GM10248 (cell line): ENCODE measurements at regions of chr5 and their contacts with region 1.

Region 1: GRCh38 chr5:176660860-176661641 is 13.8 kb downstream of the TSPAN17 start:
- DNase-seq: peak; percentile 94
- CTCF ChIP-seq: peak; percentile 97

Region 2: GRCh38 chr5:176573564-176574296 is 87.3 kb before region 1 on chr5:
- CTCF ChIA-PET with region 1: interaction called, 12 read pairs
- POLR2A ChIA-PET with region 1: no interaction called
- DNase-seq: peak; percentile 88
- CTCF ChIP-seq: peak; percentile 81

Region 3: DNA sequence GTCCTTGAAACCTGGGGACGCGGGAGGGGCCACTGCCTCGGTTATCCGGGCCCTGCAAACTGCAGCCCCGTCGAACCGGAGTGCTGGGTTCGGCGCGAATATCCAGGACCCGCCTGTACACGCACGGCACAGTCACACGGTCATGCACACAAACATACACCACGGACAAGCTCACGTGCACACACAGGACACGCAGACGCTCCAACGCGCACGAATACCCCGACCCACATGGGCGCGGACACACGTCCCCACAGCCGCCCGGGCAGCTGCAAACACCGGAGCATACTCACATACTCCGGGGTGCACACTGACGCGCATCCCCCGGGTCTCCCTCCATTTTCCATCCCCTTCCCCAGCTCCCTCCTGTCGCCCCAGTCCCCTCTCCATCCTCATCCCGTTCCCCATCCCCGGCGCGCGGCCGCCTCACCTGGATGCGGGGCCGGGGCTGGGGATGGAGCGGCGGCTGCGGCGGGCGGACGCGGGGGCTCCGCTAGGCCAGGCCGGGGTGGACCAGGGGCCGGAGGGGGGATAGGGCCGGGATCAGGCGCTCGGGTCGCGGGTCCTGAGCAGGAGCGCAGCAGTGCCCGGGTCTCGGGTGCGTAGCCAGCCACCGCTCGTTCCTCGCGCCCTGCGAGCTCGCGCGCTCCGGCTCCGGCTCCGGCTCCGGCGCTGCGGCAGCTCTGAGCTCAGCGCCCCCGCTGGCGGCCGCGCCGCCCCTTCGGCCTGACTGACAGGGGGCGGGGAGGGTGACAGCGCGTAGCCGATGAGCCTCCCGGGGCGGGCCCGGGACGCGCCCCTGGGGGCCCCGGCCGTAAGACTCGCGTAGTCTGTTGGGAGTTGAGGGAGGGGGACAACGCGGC is 31.0 kb before region 1 on chr5 and contains the starts of genes EIF4E1B and SNCB:
- CTCF ChIA-PET with region 1: interaction called, 12 read pairs
- POLR2A ChIA-PET with region 1: no interaction called
- DNase-seq: peak; percentile 80
- CTCF ChIP-seq: no peak

Region 4: GRCh38 chr5:176675675-176676360 is 14.8 kb after region 1 on chr5:
- CTCF ChIA-PET with region 1: interaction called, 158 read pairs
- POLR2A ChIA-PET with region 1: no interaction called
- DNase-seq: no peak
- CTCF ChIP-seq: no peak

Region 5: DNA sequence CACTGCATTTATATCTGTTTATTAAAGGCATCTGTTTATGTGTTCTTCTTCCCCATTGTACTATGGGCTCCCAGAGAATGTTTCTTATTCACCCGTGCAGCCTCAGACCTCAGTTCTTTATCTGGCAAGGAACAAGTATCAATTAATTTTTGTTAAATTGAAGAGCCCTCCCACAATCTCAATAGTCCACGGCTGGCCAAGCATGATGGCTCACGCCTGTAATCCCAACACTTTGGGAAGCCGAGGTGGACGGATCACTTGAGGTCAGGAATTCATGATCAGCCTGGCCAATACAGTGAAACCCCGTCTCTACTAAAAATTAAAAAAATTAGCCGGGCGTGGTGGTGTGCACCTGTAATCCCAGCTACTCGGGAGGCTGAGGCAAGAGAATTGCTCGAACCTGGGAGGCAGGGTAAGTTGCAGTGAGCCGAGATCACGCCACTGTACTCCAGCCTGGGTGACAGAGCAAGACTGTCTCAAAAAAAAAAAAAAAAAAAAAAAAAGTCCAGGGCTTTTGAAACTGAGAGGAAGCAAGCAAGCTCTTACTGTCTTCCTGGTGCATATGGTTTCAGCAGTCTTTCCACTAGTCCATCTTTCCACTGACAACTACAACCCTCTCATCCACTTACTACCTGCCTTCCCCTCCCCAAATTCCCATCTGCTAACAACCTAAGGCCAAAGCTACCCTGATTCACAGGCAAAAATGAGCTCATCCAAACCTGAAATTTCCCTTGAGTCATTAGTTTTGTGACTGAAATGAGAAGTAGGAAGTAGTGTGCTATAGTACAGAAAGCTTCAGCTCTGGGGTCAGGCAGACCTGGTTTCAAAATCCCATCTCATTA is 240.4 kb after region 1 on chr5:
- CTCF ChIA-PET with region 1: interaction called, 19 read pairs
- POLR2A ChIA-PET with region 1: no interaction called
- DNase-seq: peak; percentile 60
- CTCF ChIP-seq: no peak

Region 6: GRCh38 chr5:177071666-177072385 is 410.8 kb after region 1 on chr5:
- CTCF ChIA-PET with region 1: interaction called, 13 read pairs
- POLR2A ChIA-PET with region 1: no interaction called
- DNase-seq: peak; percentile 75
- CTCF ChIP-seq: peak; percentile 88